HCT116 (cell line): ENCODE measurements at regions of chr10 and their contacts with region 1.

Region 1: GRCh38 chr10:34861293-34862021 is 46.4 kb upstream of the PARD3 start:
- DNase-seq: no peak
- ATAC-seq: no peak
- H3K4me3 ChIP-seq: no peak overlapping the region
- H3K27ac ChIP-seq: no peak overlapping the region
- H3K4me1 ChIP-seq: peaks cover 2 to 5% of the 10 kb centered on the region in 2 experiments; a peak in 2 of 4 replicates
- H3K27me3 ChIP-seq: no peaks in the 10 kb centered on the region
- CTCF ChIP-seq: no peak
- POLR2A ChIP-seq: no peak
- RAD21 ChIP-seq: no peak

Region 2: GRCh38 chr10:34845070-34845469 is 16.4 kb before region 1 on chr10:
- CTCF ChIA-PET with region 1: no interaction called
- POLR2A ChIA-PET with region 1: no interaction called
- RAD21 ChIA-PET with region 1: no interaction called
- intact Hi-C with region 1: loop called (anchors 1 kb)
- DNase-seq: no peak
- ATAC-seq: no peak
- H3K4me3 ChIP-seq: no peak overlapping the region
- H3K27ac ChIP-seq: no peak overlapping the region
- H3K4me1 ChIP-seq: no peaks in the 10 kb centered on the region; a peak in 1 of 4 replicates
- H3K27me3 ChIP-seq: no peaks in the 10 kb centered on the region
- CTCF ChIP-seq: no peak
- POLR2A ChIP-seq: no peak
- RAD21 ChIP-seq: no peak

Region 3: GRCh38 chr10:35058134-35058533 is 196.7 kb after region 1 on chr10:
- CTCF ChIA-PET with region 1: no interaction called
- POLR2A ChIA-PET with region 1: no interaction called
- RAD21 ChIA-PET with region 1: no interaction called
- intact Hi-C with region 1: no loop called
- DNase-seq: no peak
- ATAC-seq: no peak
- H3K4me3 ChIP-seq: no peak overlapping the region
- H3K27ac ChIP-seq: no peak overlapping the region
- H3K4me1 ChIP-seq: peaks cover 0 to 5% of the 10 kb centered on the region in 2 experiments; a peak in 1 of 4 replicates
- H3K27me3 ChIP-seq: no peaks in the 10 kb centered on the region
- CTCF ChIP-seq: no peak
- POLR2A ChIP-seq: no peak
- RAD21 ChIP-seq: no peak